Naive thymus-derived CD4-positive, alpha-beta T cell (primary cell): ENCODE measurements at regions of chr15 and their contacts with region 1.

Region 1: DNA sequence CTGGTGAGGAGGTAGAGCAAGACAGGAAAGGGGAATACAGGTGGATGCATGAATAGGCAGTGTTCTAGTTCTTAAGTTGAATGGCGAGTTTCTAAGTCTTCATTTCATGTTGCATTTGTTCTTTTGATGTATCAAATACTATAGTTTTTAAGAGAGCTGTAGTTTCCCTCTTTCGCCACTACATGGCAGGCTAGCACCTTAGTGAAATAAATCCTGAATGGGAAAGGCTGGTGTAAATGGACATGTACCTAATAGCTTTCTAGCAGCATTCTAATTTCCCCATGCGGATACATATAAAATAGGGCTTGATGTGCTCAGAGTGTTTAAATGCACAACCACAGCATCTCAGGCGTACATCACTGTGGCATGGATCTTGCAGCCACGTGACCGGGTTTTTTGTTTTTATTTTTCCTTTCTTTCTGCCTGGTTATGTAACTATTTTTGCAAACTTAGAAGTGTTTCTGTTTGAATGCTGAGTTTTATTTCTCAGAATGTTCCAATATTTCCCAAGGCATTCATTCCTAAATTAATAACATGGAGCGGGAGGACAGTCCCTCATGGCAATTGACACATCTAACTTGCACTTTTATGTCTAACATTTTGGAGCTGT is 23.5 kb upstream of the CLN6 start:
- DNase-seq: peak in 7 of 9 donors; percentile 42 to 64 (median 56)
- ATAC-seq: peak; percentile 72
- H3K4me3 ChIP-seq: no peak overlapping the region
- H3K4me3 Mint-ChIP-seq: no peak overlapping the region
- H3K27ac ChIP-seq: no peak overlapping the region
- H3K27ac Mint-ChIP-seq: no peak overlapping the region
- H3K4me1 ChIP-seq: no peaks in the 10 kb centered on the region
- H3K4me1 Mint-ChIP-seq: peaks cover 0 to 14% (median 4%) of the 10 kb centered on the region in 7 donors
- H3K27me3 ChIP-seq: no peaks in the 10 kb centered on the region
- H3K27me3 Mint-ChIP-seq: peaks cover 0 to 33% (median 0%) of the 10 kb centered on the region in 5 donors

Region 2: GRCh38 chr15:68229386-68230156 is 23.5 kb before region 1 on chr15 and contains the start of gene CLN6:
- CTCF ChIA-PET with region 1: interaction called, 3 read pairs
- POLR2A ChIA-PET with region 1: no interaction called
- intact Hi-C with region 1: loop called in 1 of 2 experiments (anchors 1 kb)
- DNase-seq: peak; percentile 68 to 88 (median 81)
- ATAC-seq: peak; percentile 94
- H3K4me3 ChIP-seq: peak within 1 kb of the TSS; percentile 93
- H3K4me3 Mint-ChIP-seq: peak within 1 kb of the TSS; percentile 86 to 98 (median 92)
- H3K27ac ChIP-seq: peak within 1 kb of the TSS; percentile 79
- H3K27ac Mint-ChIP-seq: peak within 1 kb of the TSS; percentile 69 to 97 (median 88)
- H3K4me1 ChIP-seq: peaks cover 0 to 17% of the 10 kb centered on the region in 2 donors
- H3K4me1 Mint-ChIP-seq: peaks cover 30 to 44% (median 38%) of the 10 kb centered on the region in 7 donors
- H3K27me3 ChIP-seq: no peaks in the 10 kb centered on the region
- H3K27me3 Mint-ChIP-seq: peaks cover 0 to 3% (median 0%) of the 10 kb centered on the region in 5 donors
- total RNA-seq, gene CLN6: 15.0 to 66.6 (median 19.0) TPM

Region 3: GRCh38 chr15:68241088-68241935 is 11.7 kb before region 1 on chr15:
- CTCF ChIA-PET with region 1: no interaction called
- POLR2A ChIA-PET with region 1: no interaction called
- intact Hi-C with region 1: no loop called
- DNase-seq: no peak
- ATAC-seq: no peak
- H3K4me3 ChIP-seq: no peak overlapping the region
- H3K4me3 Mint-ChIP-seq: no peak overlapping the region
- H3K27ac ChIP-seq: no peak overlapping the region
- H3K27ac Mint-ChIP-seq: no peak overlapping the region
- H3K4me1 ChIP-seq: no peaks in the 10 kb centered on the region
- H3K4me1 Mint-ChIP-seq: peaks cover 0 to 1% (median 0%) of the 10 kb centered on the region in 7 donors
- H3K27me3 ChIP-seq: no peaks in the 10 kb centered on the region
- H3K27me3 Mint-ChIP-seq: peaks cover 0 to 32% (median 4%) of the 10 kb centered on the region in 5 donors

Region 4: DNA sequence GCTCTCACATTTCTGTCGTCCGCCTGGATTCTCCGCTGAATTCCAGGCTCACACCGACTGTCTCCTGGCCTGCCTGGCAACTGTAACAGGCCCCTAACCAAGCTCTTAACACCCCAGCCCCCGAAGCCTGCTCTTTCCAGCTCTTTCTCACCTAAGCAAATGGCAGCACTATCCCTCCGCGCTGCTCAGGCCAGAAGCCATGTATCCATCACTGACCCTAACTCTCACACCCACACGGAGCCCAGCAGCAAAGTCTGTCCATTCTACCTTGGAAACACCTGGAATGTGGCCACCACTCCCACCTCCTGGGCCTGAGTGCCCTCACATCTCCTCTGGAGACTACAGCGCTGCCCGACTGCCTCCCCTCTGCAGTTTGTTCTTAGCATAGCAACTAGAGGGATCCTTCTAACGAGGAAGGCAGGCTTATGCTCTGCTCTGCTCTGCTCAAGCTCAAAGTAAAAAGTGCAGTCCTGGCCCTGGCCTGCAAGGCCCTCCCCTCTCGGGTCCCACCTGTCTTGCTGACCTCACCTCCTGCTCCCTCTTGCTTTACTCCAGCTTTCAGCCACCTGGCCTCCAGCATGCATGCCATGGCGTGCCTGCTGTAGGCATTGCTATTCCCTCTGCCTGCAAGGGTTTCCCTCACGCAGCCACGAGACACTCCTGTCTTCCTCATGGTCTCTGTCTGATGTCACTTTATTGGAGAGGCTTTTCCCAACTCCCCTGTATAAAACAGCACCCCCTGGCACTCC is 51.7 kb after region 1 on chr15:
- CTCF ChIA-PET with region 1: interaction called, 75 read pairs
- POLR2A ChIA-PET with region 1: interaction called, 11 read pairs
- intact Hi-C with region 1: loop called (anchors 1 kb)
- DNase-seq: no peak
- ATAC-seq: no peak
- H3K4me3 ChIP-seq: no peak overlapping the region
- H3K4me3 Mint-ChIP-seq: no peak overlapping the region
- H3K27ac ChIP-seq: no peak overlapping the region
- H3K27ac Mint-ChIP-seq: peak overlapping the region in 4 of 9 donors; percentile 23 to 72 (median 56)
- H3K4me1 ChIP-seq: peaks cover 5 to 15% of the 10 kb centered on the region in 2 donors
- H3K4me1 Mint-ChIP-seq: peaks cover 11 to 30% (median 27%) of the 10 kb centered on the region in 7 donors
- H3K27me3 ChIP-seq: no peaks in the 10 kb centered on the region
- H3K27me3 Mint-ChIP-seq: peaks cover 0 to 7% (median 0%) of the 10 kb centered on the region in 5 donors

Region 5: GRCh38 chr15:68383161-68384074 is 130.4 kb after region 1 on chr15:
- CTCF ChIA-PET with region 1: interaction called, 8 read pairs
- POLR2A ChIA-PET with region 1: no interaction called
- intact Hi-C with region 1: loop called (anchors 1 kb)
- DNase-seq: peak in 8 of 9 donors; percentile 25 to 60 (median 36)
- ATAC-seq: peak; percentile 88
- H3K4me3 ChIP-seq: no peak overlapping the region
- H3K4me3 Mint-ChIP-seq: no peak overlapping the region
- H3K27ac ChIP-seq: no peak overlapping the region
- H3K27ac Mint-ChIP-seq: peak overlapping the region in 1 of 9 donors; percentile 66
- H3K4me1 ChIP-seq: peaks cover 0 to 7% of the 10 kb centered on the region in 2 donors
- H3K4me1 Mint-ChIP-seq: peaks cover 11 to 26% (median 14%) of the 10 kb centered on the region in 7 donors
- H3K27me3 ChIP-seq: no peaks in the 10 kb centered on the region
- H3K27me3 Mint-ChIP-seq: no peaks in the 10 kb centered on the region

Region 6: GRCh38 chr15:68672781-68673205 is 419.8 kb after region 1 on chr15:
- CTCF ChIA-PET with region 1: interaction called, 5 read pairs
- POLR2A ChIA-PET with region 1: interaction called, 3 read pairs
- intact Hi-C with region 1: loop called in 1 of 2 experiments (anchors 5 kb)
- DNase-seq: no peak
- ATAC-seq: no peak
- H3K4me3 ChIP-seq: no peak overlapping the region
- H3K4me3 Mint-ChIP-seq: no peak overlapping the region
- H3K27ac ChIP-seq: no peak overlapping the region
- H3K27ac Mint-ChIP-seq: no peak overlapping the region
- H3K4me1 ChIP-seq: no peaks in the 10 kb centered on the region
- H3K4me1 Mint-ChIP-seq: peaks cover 0 to 6% (median 4%) of the 10 kb centered on the region in 7 donors
- H3K27me3 ChIP-seq: no peaks in the 10 kb centered on the region
- H3K27me3 Mint-ChIP-seq: peaks cover 6 to 17% (median 12%) of the 10 kb centered on the region in 5 donors